HCT116 (cell line): ENCODE measurements at regions of chr3 and their contacts with region 1.

Region 1: DNA sequence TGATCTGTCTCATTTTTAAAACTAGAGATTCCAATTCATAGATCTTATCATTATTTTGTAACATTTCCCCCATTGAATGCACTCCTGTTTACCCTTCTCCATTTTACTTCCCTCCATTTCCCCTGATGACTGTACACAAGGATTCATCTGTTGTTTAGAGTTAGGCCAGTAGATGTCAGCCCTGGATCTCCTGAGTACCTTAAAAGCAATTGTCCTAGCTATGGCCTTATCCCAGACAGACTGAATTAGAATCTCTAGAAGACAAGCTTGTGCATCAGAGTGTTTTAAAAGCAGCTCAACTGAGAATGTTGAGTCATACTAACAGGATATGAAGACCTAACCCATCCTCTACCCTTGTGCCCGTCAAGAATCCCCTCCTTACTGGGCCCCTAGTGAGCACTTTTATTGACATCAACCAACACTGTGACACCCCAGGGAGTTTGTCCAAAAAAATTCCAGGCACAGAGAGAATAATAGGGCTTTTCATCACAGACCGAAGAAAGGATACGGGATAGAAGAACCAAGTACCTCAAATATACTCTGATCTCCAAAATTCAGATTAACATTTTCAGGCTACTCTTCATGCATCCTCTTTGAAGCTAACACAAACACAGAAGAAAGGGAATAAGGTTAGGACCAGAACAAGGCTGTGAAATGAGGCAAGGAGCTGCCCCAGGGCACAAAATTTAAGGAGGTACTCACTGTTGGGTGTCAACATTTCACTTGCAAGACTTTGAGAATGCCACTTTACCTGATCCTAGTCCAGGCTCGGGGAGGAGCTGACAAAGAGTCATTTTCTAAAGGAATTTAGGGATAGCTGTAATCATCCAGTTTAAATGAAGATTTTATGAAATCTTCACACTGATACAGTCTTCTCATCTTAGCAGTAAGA is 17.1 kb downstream of the ZBED2 start:
- DNase-seq: peak; percentile 69
- ATAC-seq: peak; percentile 83
- H3K4me3 ChIP-seq: no peak overlapping the region
- H3K27ac ChIP-seq: peak overlapping the region; percentile 7; the same call in 1 of the 2 replicates
- H3K4me1 ChIP-seq: peaks cover 30 to 64% of the 10 kb centered on the region in 2 experiments
- H3K27me3 ChIP-seq: no peaks in the 10 kb centered on the region
- CTCF ChIP-seq: peak; percentile 60 to 79 (median 77)
- POLR2A ChIP-seq: no peak
- RAD21 ChIP-seq: peak; percentile 92

Region 2: DNA sequence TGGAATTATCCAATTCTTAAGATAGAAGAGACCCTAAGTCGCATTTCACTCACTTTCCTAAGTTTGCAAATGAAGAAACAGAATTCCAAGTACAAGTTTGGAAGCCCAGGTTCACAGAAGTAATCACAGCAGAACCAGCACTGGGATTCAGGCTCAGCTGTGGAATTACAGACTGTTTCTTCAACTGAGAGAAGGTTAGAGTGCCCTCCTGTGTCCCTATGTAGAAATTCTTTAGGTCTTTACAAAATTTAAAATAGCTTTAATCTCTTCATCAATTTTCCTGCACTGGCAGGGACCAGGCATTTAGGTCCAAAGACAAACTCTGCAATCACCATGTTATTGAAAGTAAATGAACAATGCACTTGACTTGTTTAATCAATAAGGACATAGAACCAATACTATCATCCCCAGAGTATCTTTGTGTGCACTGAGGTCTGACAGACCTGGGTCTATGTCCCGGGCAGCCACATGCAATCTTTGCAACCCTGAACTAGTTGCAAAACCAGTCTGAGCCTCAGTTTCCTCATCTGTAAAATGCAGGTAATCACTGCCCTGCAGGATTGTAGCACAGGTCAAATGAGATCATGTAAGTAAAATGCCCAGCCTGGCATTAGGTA is 113.4 kb after region 1 on chr3:
- CTCF ChIA-PET with region 1: interaction called, 34 read pairs
- POLR2A ChIA-PET with region 1: interaction called, 3 read pairs
- RAD21 ChIA-PET with region 1: interaction called, 7 to 12 read pairs
- intact Hi-C with region 1: loop called (anchors 1 kb)
- DNase-seq: no peak
- ATAC-seq: peak; percentile 70
- H3K4me3 ChIP-seq: no peak overlapping the region
- H3K27ac ChIP-seq: no peak overlapping the region
- H3K4me1 ChIP-seq: peaks cover 12 to 70% of the 10 kb centered on the region in 2 experiments
- H3K27me3 ChIP-seq: no peaks in the 10 kb centered on the region
- CTCF ChIP-seq: peak; percentile 39 to 65 (median 52); a peak in 5 of 6 replicates
- POLR2A ChIP-seq: no peak
- RAD21 ChIP-seq: peak; percentile 78